ENCODE measurements at regions of chr3 and their contacts with region 1.

Region 1: DNA sequence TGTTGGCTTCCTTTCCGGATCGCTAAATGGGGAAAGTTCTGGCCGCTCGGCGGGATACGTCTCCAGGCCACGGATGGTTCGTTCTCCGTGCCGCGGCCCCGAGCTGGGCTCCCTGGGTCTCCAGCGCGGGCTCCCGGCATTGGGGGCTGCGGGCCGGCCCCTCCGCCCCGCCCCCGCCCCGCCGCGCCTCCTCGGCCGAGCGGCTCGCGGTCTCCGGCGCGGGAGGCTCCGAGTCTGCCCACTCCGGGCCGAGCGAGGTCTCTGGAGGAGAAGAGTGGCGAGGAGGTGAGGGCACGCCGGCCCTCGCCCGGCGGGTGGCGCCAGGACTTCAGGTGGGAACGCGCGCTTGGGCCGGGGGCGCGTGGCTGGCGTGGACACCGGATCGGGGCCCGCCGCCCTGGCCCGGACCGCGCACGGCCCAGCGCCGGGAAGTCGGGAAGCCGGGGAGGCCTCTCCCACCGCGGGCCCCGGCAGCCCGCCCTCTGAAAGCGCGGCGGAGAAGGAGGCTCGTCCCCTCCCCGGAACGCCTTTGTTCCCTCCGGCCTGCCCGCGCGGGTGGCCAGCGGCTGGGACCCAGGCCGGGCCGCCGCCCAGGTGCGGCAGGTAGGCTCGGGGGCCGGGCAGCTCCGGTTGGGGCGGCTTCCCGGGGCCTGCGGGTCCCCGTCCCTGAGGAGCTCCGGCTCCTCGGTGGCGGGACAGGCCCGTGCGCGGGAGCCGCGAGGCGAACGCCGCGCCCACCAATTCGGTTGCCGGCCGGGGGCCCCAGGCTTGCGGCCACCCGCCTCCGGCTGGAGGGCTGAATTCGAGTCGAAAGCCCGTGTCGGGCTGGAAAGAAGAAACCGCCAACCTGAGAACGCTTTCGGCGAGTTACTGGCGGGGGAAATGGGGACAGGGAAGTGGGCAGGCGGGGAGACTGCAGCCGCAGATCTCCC is 1.1 kb downstream of the B3GNT5 start:
- DNase-seq: peak; percentile 45 to 67
- H3K4me3 ChIP-seq: peak overlapping the region; percentile 43
- H3K4me3 Mint-ChIP-seq: peak overlapping the region; percentile 82
- H3K27ac Mint-ChIP-seq: peak overlapping the region; percentile 78
- H3K4me1 ChIP-seq: peaks cover 4% of the 10 kb centered on the region; the same call in 1 of the 2 replicates
- H3K4me1 Mint-ChIP-seq: peaks cover 11% of the 10 kb centered on the region
- H3K27me3 ChIP-seq: no peaks in the 10 kb centered on the region
- H3K27me3 Mint-ChIP-seq: no peaks in the 10 kb centered on the region
- CTCF ChIP-seq: no peak

Region 2: GRCh38 chr3:183178629-183179549 is 75.3 kb before region 1 on chr3:
- CTCF ChIA-PET with region 1: no interaction called
- POLR2A ChIA-PET with region 1: no interaction called
- intact Hi-C with region 1: loop called (anchors 1 kb)
- DNase-seq: peak; percentile 55 to 68
- H3K4me3 ChIP-seq: peak overlapping the region; percentile 40
- H3K4me3 Mint-ChIP-seq: peak overlapping the region; percentile 74
- H3K27ac Mint-ChIP-seq: no peak overlapping the region
- H3K4me1 ChIP-seq: no peaks in the 10 kb centered on the region
- H3K4me1 Mint-ChIP-seq: no peaks in the 10 kb centered on the region
- H3K27me3 ChIP-seq: no peaks in the 10 kb centered on the region; the same call in 1 of the 2 replicates
- H3K27me3 Mint-ChIP-seq: peaks cover 7% of the 10 kb centered on the region
- CTCF ChIP-seq: peak in 1 of 2 experiments; percentile 48

Region 3: GRCh38 chr3:183268366-183268765 is 14.2 kb after region 1 on chr3:
- CTCF ChIA-PET with region 1: no interaction called
- POLR2A ChIA-PET with region 1: no interaction called
- intact Hi-C with region 1: loop called (anchors 2 kb)
- DNase-seq: peak in 1 of 2 experiments; percentile 30
- H3K4me3 ChIP-seq: no peak overlapping the region
- H3K4me3 Mint-ChIP-seq: no peak overlapping the region
- H3K27ac Mint-ChIP-seq: peak overlapping the region; percentile 7
- H3K4me1 ChIP-seq: peaks cover 38% of the 10 kb centered on the region
- H3K4me1 Mint-ChIP-seq: peaks cover 15% of the 10 kb centered on the region
- H3K27me3 ChIP-seq: no peaks in the 10 kb centered on the region
- H3K27me3 Mint-ChIP-seq: no peaks in the 10 kb centered on the region
- CTCF ChIP-seq: no peak

Measured in Caco-2 (cell line).